ENCODE measurements at regions of chr1 and their contacts with region 1.

Region 1: DNA sequence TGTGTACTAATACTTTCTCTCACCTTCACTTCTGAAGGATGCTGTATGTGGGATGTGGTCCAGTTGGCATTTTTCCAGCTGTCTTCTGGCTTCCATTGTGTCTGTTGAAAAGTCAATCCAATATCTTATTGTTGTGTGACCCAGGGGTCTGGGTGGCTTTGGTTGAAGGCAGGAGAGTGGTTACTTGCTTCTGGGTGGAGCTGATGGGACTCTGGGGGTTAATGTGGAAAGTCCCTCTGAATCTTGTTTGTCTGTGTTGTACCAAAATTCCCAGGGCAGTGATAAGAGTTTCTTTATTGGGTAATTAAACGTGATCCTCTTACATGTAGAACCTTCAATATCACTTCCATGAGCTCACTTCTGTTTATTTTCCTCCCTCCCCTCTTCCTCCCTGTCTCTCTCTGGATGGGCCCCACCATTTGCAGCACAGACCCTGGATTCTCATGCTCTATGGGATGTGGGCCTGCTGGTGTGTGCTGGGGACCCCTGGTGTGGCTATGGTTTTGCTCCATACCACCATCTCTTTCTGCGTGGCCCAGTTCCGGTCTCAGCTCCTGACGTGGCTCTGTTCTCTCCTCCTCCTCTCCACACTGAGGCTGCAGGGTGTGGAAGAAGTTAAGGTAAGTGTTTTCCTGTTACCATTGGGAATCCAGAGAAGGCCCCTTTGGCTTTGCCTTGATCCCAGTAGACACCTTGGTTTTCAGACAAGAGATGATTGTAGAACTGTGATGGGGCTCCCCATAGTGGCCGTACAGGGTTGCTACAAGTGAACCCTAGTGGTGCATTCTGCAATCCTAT is 71.5 kb downstream of the HHAT start:
- DNase-seq: peak; percentile 73
- H3K4me3 ChIP-seq: no peak overlapping the region; a peak in 1 of 4 replicates
- H3K27ac ChIP-seq: no peak overlapping the region
- H3K4me1 ChIP-seq: peaks cover 0 to 1% of the 10 kb centered on the region in 2 experiments; a peak in 2 of 4 replicates
- H3K27me3 ChIP-seq: no peaks in the 10 kb centered on the region
- CTCF ChIP-seq: peak; percentile 93
- EP300 ChIP-seq: no peak
- RAD21 ChIP-seq: peak; percentile 88

Region 2: DNA sequence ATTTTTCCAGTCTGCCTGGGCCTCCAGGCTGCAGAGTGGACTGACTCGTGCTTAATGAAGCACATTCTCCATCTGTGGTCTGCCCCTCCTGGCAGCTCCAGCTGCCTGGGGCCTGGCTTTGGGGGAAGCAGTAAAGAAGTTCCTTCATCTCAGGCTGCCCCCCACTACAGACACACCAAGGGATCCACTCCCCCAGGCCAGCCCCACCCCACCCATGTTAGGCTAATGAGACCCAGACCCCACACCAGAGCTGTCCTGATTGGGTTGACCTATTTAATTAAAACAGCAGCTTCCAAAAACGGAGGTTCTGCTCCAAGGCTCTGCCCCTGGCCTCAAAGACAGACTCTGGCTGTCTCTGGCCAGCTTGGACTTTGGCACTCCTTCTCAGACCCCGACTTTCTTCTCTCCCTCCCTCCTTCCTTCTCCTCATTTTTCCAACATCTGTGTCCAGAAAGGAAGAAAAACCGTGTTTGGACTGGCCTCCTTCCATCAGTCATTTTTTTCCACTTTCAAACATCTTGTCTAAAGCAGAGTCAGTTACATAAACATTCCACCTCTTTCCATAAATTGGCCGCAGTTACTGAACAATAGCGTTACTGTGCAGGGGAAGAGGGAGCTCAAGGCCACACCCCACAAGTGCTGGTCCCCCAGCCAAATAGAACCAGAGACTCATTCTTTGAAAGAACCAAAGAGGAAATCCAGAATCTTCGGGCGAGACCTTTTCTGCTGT is 137.9 kb before region 1 on chr1:
- CTCF ChIA-PET with region 1: no interaction called
- POLR2A ChIA-PET with region 1: no interaction called
- DNase-seq: peak; percentile 41
- H3K4me3 ChIP-seq: no peak overlapping the region
- H3K27ac ChIP-seq: peak overlapping the region; percentile 53 to 62; a peak in 3 of 4 replicates
- H3K4me1 ChIP-seq: peaks cover 11 to 30% of the 10 kb centered on the region in 2 experiments; a peak in 3 of 4 replicates
- H3K27me3 ChIP-seq: no peaks in the 10 kb centered on the region; the same call in 1 of the 2 replicates
- CTCF ChIP-seq: no peak
- EP300 ChIP-seq: no peak
- RAD21 ChIP-seq: no peak

Region 3: GRCh38 chr1:210360852-210361477 is 39.3 kb before region 1 on chr1:
- CTCF ChIA-PET with region 1: interaction called, 40 read pairs
- POLR2A ChIA-PET with region 1: no interaction called
- DNase-seq: peak; percentile 53
- H3K4me3 ChIP-seq: no peak overlapping the region
- H3K27ac ChIP-seq: no peak overlapping the region
- H3K4me1 ChIP-seq: peaks cover 0 to 2% of the 10 kb centered on the region in 2 experiments; a peak in 1 of 4 replicates
- H3K27me3 ChIP-seq: no peaks in the 10 kb centered on the region
- CTCF ChIP-seq: peak; percentile 82
- EP300 ChIP-seq: no peak
- RAD21 ChIP-seq: peak; percentile 72

Region 4: GRCh38 chr1:210384630-210385029 is 15.6 kb before region 1 on chr1:
- CTCF ChIA-PET with region 1: interaction called, 12 read pairs
- POLR2A ChIA-PET with region 1: no interaction called
- DNase-seq: no peak
- H3K4me3 ChIP-seq: no peak overlapping the region
- H3K27ac ChIP-seq: peak overlapping the region in 1 of 2 experiments; percentile 31; a peak in 2 of 4 replicates
- H3K4me1 ChIP-seq: 0 out of 4 replicates have a peak, but pooled peaks cover 0 to 6% of the 10 kb centered on the region in 2 experiments
- H3K27me3 ChIP-seq: no peaks in the 10 kb centered on the region
- CTCF ChIP-seq: no peak
- EP300 ChIP-seq: no peak
- RAD21 ChIP-seq: no peak

Region 5: GRCh38 chr1:210441028-210441427 is 40.8 kb after region 1 on chr1:
- CTCF ChIA-PET with region 1: no interaction called
- POLR2A ChIA-PET with region 1: no interaction called
- DNase-seq: no peak
- H3K4me3 ChIP-seq: no peak overlapping the region
- H3K27ac ChIP-seq: no peak overlapping the region
- H3K4me1 ChIP-seq: peaks cover 13 to 24% of the 10 kb centered on the region in 2 experiments; a peak in 3 of 4 replicates
- H3K27me3 ChIP-seq: no peaks in the 10 kb centered on the region
- CTCF ChIP-seq: no peak
- EP300 ChIP-seq: no peak
- RAD21 ChIP-seq: no peak

Region 6: DNA sequence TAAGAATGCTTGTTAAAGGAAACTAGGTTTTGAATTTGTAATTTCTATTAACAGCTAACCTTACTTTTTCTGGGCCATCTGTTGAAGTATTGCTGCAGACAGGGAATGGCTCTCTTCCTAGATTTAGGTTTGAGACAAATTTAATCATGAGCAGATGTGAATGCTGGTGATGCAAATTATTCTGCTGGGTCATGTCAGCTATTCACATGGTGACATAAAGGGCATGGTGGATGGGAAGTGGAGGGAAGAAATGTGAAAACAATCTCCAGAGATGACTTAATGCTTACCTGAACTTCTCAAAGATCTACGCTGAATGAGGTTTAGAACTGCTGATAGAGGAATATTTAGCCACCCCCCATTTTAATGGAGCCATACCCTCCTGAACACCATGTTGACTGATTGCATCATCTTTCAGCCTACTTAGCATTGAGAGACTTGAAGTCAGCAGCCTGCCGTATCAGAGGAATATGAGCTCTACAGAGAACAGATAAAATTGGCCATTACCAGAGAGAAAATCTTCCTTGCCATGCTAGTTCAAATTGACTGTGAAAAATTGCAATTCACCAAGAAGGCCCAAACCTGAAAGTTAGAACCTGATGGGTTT is 67.3 kb after region 1 on chr1:
- CTCF ChIA-PET with region 1: no interaction called
- POLR2A ChIA-PET with region 1: no interaction called
- DNase-seq: peak; percentile 55
- H3K4me3 ChIP-seq: no peak overlapping the region
- H3K27ac ChIP-seq: peak overlapping the region; percentile 9 to 96; a peak in 3 of 4 replicates
- H3K4me1 ChIP-seq: peaks cover 0 to 41% of the 10 kb centered on the region in 2 experiments; a peak in 2 of 4 replicates
- H3K27me3 ChIP-seq: no peaks in the 10 kb centered on the region
- CTCF ChIP-seq: no peak
- EP300 ChIP-seq: peak; percentile 36 to 86; a peak in 3 of 4 replicates
- RAD21 ChIP-seq: 0 out of 2 replicates have a peak, but pooled peaks have one; percentile 14

Measured in SK-N-SH (cell line).